Gastrocnemius medialis (tissue), 4 donors: ENCODE measurements at regions of chr5 and their contacts with region 1.

Region 1: DNA sequence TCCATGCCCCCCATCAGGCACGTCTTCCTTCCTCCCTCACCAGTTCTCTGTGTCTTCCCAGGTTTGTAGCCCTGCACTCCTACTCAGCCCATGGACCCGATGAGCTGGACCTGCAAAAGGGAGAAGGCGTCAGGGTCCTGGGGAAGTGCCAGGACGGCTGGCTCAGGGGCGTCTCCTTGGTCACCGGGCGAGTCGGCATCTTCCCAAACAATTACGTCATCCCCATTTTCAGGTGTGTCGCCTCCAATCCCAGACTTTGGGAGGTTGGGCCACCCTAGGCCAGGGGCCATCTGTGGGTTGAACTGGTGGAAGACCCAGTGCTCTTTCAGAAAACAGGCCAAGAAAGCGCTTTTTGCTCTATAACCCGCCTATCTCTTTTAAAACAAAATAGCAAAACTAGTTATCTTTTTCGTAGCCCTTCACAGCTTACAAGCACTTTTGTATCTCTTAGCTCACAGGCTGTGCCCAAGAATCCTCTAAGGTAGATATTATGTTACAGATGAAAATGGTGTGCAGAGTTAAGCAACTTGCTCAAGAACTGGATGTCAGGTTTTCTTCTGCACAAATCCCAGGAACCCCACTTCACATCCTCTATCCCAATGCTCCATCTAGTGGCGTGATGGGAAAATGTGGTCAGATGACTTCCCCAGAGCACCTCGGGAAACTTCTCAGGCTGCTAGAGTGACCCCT is 56.2 kb downstream of the PLAC8L1 start:
- DNase-seq: peak in 1 of 2 donors; percentile 35
- ATAC-seq: peak; percentile 61 to 92
- H3K4me3 ChIP-seq: no peak overlapping the region
- H3K27ac ChIP-seq: peak overlapping the region in 1 of 4 donors; percentile 13
- H3K4me1 ChIP-seq: peaks cover 0 to 4% of the 10 kb centered on the region in 2 donors
- H3K27me3 ChIP-seq: no peaks in the 10 kb centered on the region
- CTCF ChIP-seq: peak; percentile 38 to 66 (median 56)
- POLR2A ChIP-seq: no peak

Region 2: DNA sequence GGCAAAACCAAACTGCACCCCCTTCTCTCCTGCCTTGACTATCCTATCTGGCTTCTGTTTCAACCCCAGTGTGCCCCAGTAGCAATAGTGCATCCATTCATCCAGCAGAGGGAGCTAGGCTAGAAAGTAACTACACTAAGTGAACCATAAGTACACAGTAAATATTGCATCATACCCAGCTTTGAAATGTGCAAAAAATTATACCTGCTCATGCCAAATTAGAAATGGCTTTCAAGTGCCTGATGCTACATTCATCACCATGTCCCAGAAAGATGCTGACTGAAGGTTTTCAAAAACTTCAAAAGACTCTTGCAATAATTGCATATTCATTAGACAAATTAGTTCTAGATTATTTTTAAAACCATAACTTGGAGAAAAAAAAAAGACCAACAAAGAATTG is 367.5 kb before region 1 on chr5:
- in situ Hi-C with region 1: loop called (anchors 25 kb)
- intact Hi-C with region 1: loop called (anchors 1 kb)
- DNase-seq: peak; percentile 8 to 30
- ATAC-seq: peak; percentile 65 to 86
- H3K4me3 ChIP-seq: no peak overlapping the region
- H3K27ac ChIP-seq: no peak overlapping the region
- H3K4me1 ChIP-seq: peaks cover 0 to 7% of the 10 kb centered on the region in 2 donors
- H3K27me3 ChIP-seq: no peaks in the 10 kb centered on the region
- CTCF ChIP-seq: peak; percentile 28 to 63 (median 52)
- POLR2A ChIP-seq: no peak

Region 3: GRCh38 chr5:145834917-145835847 is 214.0 kb before region 1 on chr5 and contains the start of gene PRELID2:
- in situ Hi-C with region 1: no loop called
- intact Hi-C with region 1: loop called (anchors 5 kb)
- DNase-seq: peak; percentile 64 to 77
- ATAC-seq: peak; percentile 92 to 93
- H3K4me3 ChIP-seq: peak within 1 kb of the TSS; percentile 63 to 75 (median 67)
- H3K27ac ChIP-seq: peak within 1 kb of the TSS; percentile 56 to 77 (median 65)
- H3K4me1 ChIP-seq: peaks cover 7 to 8% of the 10 kb centered on the region in 2 donors
- H3K27me3 ChIP-seq: no peaks in the 10 kb centered on the region
- CTCF ChIP-seq: no peak
- POLR2A ChIP-seq: peak; percentile 35 to 48
- total RNA-seq, gene PRELID2: 1.1 to 6.7 (median 1.2) TPM in 3 of 4 donors, not detected in the other

Region 4: DNA sequence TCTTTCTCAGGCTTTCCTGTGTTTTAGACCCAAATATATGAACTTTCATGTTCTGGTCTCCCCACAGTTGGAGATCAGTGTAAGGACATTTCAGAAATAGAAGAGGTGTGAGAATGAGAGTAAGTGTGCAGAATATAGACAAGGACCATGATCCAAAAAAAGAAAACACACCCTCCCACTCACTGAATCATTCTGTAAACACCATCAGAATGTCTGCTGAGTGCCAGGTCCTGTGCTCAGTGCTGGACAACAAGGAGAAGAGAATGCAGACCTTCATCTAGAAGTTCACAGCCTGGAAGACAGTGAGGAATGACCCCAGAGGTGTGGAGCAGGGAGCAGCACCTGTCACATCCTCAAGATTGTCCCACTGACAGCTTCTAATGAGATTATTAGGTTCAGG is 131.9 kb before region 1 on chr5:
- in situ Hi-C with region 1: loop called in 1 of 4 experiments (anchors 10 kb)
- intact Hi-C with region 1: no loop called
- DNase-seq: no peak
- ATAC-seq: no peak
- H3K4me3 ChIP-seq: no peak overlapping the region
- H3K27ac ChIP-seq: no peak overlapping the region
- H3K4me1 ChIP-seq: no peaks in the 10 kb centered on the region
- H3K27me3 ChIP-seq: no peaks in the 10 kb centered on the region
- CTCF ChIP-seq: no peak
- POLR2A ChIP-seq: no peak

Region 5: DNA sequence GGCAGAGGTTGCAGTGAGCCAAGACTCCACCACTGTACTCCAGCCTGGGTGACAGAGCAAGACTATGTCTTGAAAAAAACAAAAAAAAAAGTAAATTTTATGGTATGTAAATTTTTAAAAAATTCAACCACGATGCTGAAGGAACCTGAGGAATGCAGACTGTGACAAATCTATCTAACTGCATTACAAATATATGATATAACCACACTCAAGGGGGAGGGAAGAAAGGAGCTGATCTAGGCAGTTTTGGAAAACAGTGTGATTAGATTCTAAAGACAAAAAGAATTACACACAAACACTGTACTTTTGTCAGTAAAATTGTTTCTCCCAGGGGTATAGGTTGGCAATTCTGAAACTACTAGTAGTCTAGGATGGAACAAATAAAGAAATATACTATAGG is 116.3 kb after region 1 on chr5:
- in situ Hi-C with region 1: no loop called
- intact Hi-C with region 1: no loop called
- DNase-seq: no peak
- ATAC-seq: no peak
- H3K4me3 ChIP-seq: no peak overlapping the region
- H3K27ac ChIP-seq: no peak overlapping the region
- H3K4me1 ChIP-seq: no peaks in the 10 kb centered on the region
- H3K27me3 ChIP-seq: no peaks in the 10 kb centered on the region
- CTCF ChIP-seq: no peak
- POLR2A ChIP-seq: no peak